A549 (cell line): ENCODE measurements at regions of chr1 and their contacts with region 1.

Region 1: DNA sequence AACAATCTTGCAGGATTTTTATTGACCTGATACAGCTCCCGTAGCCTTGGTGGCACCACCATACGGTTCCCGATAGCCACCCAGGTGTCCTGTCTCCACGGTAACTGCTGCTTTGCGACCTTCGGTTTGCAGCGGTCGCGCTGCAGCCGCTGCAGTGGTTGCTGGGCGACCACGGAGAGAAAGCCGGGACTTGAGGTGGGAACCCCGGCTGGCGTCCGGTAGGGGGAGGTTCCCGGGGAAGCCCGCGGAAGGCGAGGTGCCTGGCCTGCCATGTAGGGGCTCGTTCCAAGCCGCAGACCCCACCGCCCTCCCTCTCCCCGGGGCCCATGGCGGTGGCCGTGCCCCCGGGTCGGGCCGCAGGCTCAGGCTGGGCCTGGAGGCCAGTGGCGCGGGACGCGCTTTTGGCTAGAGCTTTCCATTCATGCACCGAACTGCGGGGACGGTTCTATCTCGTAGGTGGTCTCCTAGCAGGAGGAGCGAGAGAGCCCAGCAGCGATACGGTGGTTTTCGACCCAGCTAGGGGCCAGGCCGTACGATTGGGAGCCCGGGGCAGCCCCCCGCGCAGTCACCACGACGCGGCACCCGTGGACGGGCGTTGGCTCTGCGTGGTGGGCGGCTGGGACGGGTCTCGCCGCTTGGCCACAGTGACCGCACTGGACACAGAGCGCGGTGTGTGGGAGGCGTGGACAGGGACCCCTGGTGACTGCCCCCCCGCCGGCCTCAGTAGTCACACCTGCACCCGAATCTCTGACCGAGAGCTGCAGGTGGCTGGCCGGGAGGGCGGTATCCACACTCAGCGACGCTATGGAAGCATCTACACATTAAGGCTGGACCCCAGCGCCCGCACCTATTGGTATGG is at the start of gene KLHDC9:
- DNase-seq: peak; percentile 64 to 75
- ATAC-seq: peak; percentile 73 to 78
- H3K4me3 ChIP-seq: peak within 1 kb of the TSS; percentile 41
- H3K27ac ChIP-seq: peak within 1 kb of the TSS; percentile 59 to 86
- H3K4me1 ChIP-seq: peaks cover 11% of the 10 kb centered on the region; the same call in 2 of the 3 replicates
- CTCF ChIP-seq: no peak
- EP300 ChIP-seq: no peak
- POLR2A ChIP-seq: no peak
- RAD21 ChIP-seq: no peak
- polyA plus RNA-seq, gene KLHDC9: 3.6 and 4.6 TPM in 2 replicates

Region 2: GRCh38 chr1:160987359-160988062 is 110.9 kb before region 1 on chr1:
- CTCF ChIA-PET with region 1: interaction called, 176 read pairs
- POLR2A ChIA-PET with region 1: interaction called, 3 read pairs
- DNase-seq: no peak
- ATAC-seq: no peak
- H3K4me3 ChIP-seq: no peak overlapping the region
- H3K27ac ChIP-seq: no peak overlapping the region
- H3K4me1 ChIP-seq: peaks cover 8% of the 10 kb centered on the region; the same call in 2 of the 3 replicates
- CTCF ChIP-seq: no peak
- EP300 ChIP-seq: no peak
- POLR2A ChIP-seq: no peak
- RAD21 ChIP-seq: no peak

Region 3: GRCh38 chr1:161013488-161014230 is 84.8 kb before region 1 on chr1:
- CTCF ChIA-PET with region 1: interaction called, 31 read pairs
- POLR2A ChIA-PET with region 1: interaction called, 3 read pairs
- DNase-seq: peak; percentile 91 to 92
- ATAC-seq: peak; percentile 94 to 98
- H3K4me3 ChIP-seq: peak overlapping the region; percentile 31
- H3K27ac ChIP-seq: peak overlapping the region; percentile 83 to 92
- H3K4me1 ChIP-seq: peaks cover 66% of the 10 kb centered on the region
- CTCF ChIP-seq: no peak
- EP300 ChIP-seq: peak in 1 of 2 experiments; percentile 68; a peak in 2 of 5 replicates
- POLR2A ChIP-seq: peak; percentile 48; the same call in 1 of the 2 replicates
- RAD21 ChIP-seq: no peak

Region 4: GRCh38 chr1:161045750-161046571 is 52.5 kb before region 1 on chr1 and contains the start of gene USF1:
- CTCF ChIA-PET with region 1: interaction called, 42 read pairs
- POLR2A ChIA-PET with region 1: interaction called, 3 read pairs
- DNase-seq: peak; percentile 96 to 97
- ATAC-seq: peak; percentile 90 to 95
- H3K4me3 ChIP-seq: peak within 1 kb of the TSS; percentile 75
- H3K27ac ChIP-seq: peak within 1 kb of the TSS; percentile 87 to 93
- H3K4me1 ChIP-seq: peaks cover 6% of the 10 kb centered on the region
- CTCF ChIP-seq: no peak
- EP300 ChIP-seq: no peak
- POLR2A ChIP-seq: peak; percentile 77
- RAD21 ChIP-seq: no peak
- polyA plus RNA-seq, gene USF1: 35.5 and 43.5 TPM in 2 replicates

Region 5: GRCh38 chr1:161082991-161083742 is 15.3 kb before region 1 on chr1:
- CTCF ChIA-PET with region 1: interaction called, 167 read pairs
- POLR2A ChIA-PET with region 1: no interaction called
- DNase-seq: peak; percentile 69 to 91
- ATAC-seq: peak; percentile 90 to 91
- H3K4me3 ChIP-seq: no peak overlapping the region
- H3K27ac ChIP-seq: peak overlapping the region; percentile 88
- H3K4me1 ChIP-seq: peaks cover 56% of the 10 kb centered on the region
- CTCF ChIP-seq: no peak
- EP300 ChIP-seq: peak in 1 of 2 experiments; percentile 12; a peak in 1 of 5 replicates
- POLR2A ChIP-seq: peak; percentile 16; the same call in 1 of the 2 replicates
- RAD21 ChIP-seq: peak in 1 of 2 experiments; percentile 35; a peak in 2 of 5 replicates

Region 6: DNA sequence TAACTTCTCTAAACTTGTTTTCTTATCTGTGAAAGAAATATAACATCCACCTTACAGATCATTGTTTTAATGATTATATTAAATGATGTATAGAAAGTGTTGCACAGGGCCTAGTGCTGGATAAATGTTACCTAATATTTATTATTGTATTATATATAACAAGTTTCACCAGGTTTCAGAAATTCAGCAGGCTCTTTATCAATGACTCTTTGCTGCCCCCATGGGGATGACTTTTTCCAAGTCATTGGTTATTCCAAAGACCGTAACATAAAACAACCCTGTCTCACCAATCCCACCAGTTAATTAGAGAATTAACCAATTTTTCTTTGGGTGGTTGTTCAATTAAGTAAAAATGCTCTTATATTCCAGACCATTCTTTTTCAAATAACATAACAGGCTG is 41.3 kb after region 1 on chr1:
- CTCF ChIA-PET with region 1: interaction called, 16 read pairs
- POLR2A ChIA-PET with region 1: no interaction called
- DNase-seq: peak; percentile 35 to 44
- ATAC-seq: peak in 1 of 2 experiments; percentile 66; a peak in 3 of 6 replicates
- H3K4me3 ChIP-seq: no peak overlapping the region
- H3K27ac ChIP-seq: no peak overlapping the region
- H3K4me1 ChIP-seq: no peaks in the 10 kb centered on the region; the same call in 2 of the 3 replicates
- CTCF ChIP-seq: peak; percentile 53
- EP300 ChIP-seq: no peak
- POLR2A ChIP-seq: no peak
- RAD21 ChIP-seq: peak; percentile 56 to 62

Region 7: GRCh38 chr1:161274874-161275273 is 176.4 kb after region 1 on chr1:
- CTCF ChIA-PET with region 1: no interaction called
- POLR2A ChIA-PET with region 1: no interaction called
- DNase-seq: no peak
- ATAC-seq: no peak
- H3K4me3 ChIP-seq: no peak overlapping the region
- H3K27ac ChIP-seq: no peak overlapping the region
- H3K4me1 ChIP-seq: no peaks in the 10 kb centered on the region
- CTCF ChIP-seq: no peak
- EP300 ChIP-seq: no peak
- POLR2A ChIP-seq: no peak
- RAD21 ChIP-seq: no peak

Region 8: GRCh38 chr1:161298116-161298515 is 199.7 kb after region 1 on chr1:
- CTCF ChIA-PET with region 1: no interaction called
- POLR2A ChIA-PET with region 1: no interaction called
- DNase-seq: no peak
- ATAC-seq: no peak
- H3K4me3 ChIP-seq: no peak overlapping the region
- H3K27ac ChIP-seq: no peak overlapping the region
- H3K4me1 ChIP-seq: no peaks in the 10 kb centered on the region
- CTCF ChIP-seq: no peak
- EP300 ChIP-seq: no peak
- POLR2A ChIP-seq: no peak
- RAD21 ChIP-seq: no peak

Region 9: GRCh38 chr1:161359291-161359690 is 260.9 kb after region 1 on chr1:
- CTCF ChIA-PET with region 1: no interaction called
- POLR2A ChIA-PET with region 1: no interaction called
- DNase-seq: no peak
- ATAC-seq: no peak
- H3K4me3 ChIP-seq: no peak overlapping the region
- H3K27ac ChIP-seq: no peak overlapping the region
- H3K4me1 ChIP-seq: no peaks in the 10 kb centered on the region
- CTCF ChIP-seq: no peak
- EP300 ChIP-seq: no peak
- POLR2A ChIP-seq: no peak
- RAD21 ChIP-seq: no peak